ENCODE measurements at regions of chr5 and their contacts with region 1.

Region 1: DNA sequence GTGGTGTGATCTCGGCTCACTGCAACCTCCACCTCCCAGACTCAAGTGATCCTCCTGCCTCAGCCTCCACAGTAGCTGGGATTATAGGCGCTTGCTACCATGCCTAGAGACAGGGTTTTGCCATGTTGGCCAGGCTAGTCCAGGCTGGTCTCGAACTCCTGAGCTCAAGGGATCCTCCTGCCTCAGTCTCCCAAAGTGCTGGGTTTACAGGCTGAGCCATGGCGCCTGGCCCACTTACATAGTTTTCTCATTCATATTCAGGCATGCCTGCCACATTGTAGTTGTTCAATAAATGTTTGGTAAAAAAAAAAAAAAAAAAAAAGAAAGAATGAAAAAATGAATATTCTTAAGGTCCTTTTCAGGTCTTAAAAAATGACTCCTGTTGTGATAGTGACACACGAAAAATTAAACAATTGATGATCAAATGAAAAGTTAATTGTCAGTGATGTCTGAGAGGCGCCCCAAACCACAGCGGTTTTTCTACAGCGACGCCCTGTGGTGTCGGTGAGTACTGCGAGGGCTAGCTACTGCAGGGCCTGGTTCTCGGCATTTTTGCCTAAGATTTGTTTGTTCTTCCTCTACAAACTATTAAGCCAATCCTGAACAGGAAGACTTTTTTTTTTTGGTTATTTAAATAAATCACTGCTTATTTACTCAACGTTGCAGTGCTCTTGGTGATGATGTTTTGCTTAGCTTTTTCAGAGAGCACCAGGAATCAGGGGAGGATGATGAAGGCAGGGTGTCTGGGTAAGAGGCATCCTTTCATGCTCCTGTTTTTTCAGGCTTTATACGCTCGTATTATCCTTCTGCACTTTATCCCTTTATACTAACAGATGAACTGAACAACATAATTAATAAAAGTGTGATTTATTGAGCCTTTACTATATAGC is 67.0 kb upstream of the DPYSL3 start:
- DNase-seq: peak; percentile 49
- H3K4me3 ChIP-seq: peak overlapping the region in 1 of 2 experiments; percentile 29; a peak in 1 of 4 replicates
- H3K27ac ChIP-seq: no peak overlapping the region
- H3K4me1 ChIP-seq: peaks cover 0 to 4% of the 10 kb centered on the region in 2 experiments; a peak in 1 of 4 replicates
- H3K27me3 ChIP-seq: no peaks in the 10 kb centered on the region
- CTCF ChIP-seq: peak; percentile 88
- EP300 ChIP-seq: no peak
- RAD21 ChIP-seq: peak; percentile 69

Region 2: DNA sequence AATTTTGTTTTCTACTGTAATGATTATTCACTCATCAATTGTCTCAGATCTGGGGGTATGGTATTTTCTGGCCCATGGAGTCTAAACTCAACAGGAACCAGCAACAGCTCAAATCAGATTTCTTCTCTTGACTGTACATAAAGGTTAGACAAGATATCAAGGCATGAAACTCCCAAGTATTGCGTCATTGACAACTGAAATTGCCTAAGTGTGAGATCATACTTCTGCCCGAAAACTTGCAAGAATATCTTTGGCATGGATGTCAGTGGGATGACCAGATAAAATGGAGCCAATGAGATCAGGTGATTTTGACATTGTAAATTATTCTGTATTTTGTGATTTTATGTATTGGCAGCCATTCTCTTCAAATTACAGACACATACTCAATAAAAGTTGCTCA is 483.7 kb before region 1 on chr5:
- CTCF ChIA-PET with region 1: no interaction called
- POLR2A ChIA-PET with region 1: no interaction called
- DNase-seq: no peak
- H3K4me3 ChIP-seq: no peak overlapping the region
- H3K27ac ChIP-seq: no peak overlapping the region
- H3K4me1 ChIP-seq: peaks cover 0 to 5% of the 10 kb centered on the region in 2 experiments; a peak in 2 of 4 replicates
- H3K27me3 ChIP-seq: no peaks in the 10 kb centered on the region
- CTCF ChIP-seq: no peak
- EP300 ChIP-seq: no peak
- RAD21 ChIP-seq: no peak

Region 3: DNA sequence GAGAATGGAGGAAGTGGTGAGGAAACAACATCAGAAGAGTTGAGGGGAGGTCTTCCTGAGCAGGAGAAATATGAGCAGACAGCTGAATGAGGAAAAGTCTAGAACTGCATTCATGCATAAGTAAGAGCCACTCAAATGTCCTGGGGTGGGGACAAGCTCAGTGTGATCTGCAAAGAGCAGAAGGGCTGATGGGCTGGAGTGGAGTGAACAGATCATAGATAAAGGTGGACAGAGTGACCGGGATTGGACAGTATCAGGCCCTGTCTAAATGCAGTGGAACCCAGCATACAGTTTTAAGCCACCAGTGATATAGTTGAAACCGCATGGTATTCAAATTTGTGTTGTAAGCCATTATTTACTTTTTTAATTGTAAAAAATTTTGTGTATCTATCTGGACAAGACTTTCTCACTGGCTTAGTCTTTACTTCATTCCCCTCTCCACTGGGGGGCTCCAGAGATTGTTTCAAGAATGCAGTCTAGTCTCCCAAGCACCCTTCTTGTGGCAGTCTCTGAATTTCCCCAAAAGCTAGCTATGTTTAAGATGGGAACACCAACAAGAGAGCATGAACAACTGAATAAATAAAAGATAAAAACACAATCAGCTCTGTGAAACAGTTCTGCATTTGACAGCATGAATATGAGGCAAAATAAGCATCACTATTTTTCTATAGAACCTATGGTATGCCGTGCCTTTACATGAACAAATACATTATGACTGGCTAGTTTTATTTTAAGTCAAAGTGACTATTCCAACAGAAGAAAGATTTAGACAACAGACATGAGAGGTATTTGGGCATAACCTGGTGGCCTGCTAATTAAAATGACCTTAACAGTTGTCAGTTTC is 352.7 kb before region 1 on chr5:
- CTCF ChIA-PET with region 1: interaction called, 55 read pairs
- POLR2A ChIA-PET with region 1: no interaction called
- DNase-seq: peak; percentile 69
- H3K4me3 ChIP-seq: no peak overlapping the region
- H3K27ac ChIP-seq: no peak overlapping the region
- H3K4me1 ChIP-seq: no peaks in the 10 kb centered on the region; a peak in 2 of 4 replicates
- H3K27me3 ChIP-seq: no peaks in the 10 kb centered on the region
- CTCF ChIP-seq: peak; percentile 84
- EP300 ChIP-seq: no peak
- RAD21 ChIP-seq: peak; percentile 84

Region 4: GRCh38 chr5:147382776-147383175 is 194.1 kb before region 1 on chr5:
- CTCF ChIA-PET with region 1: interaction called, 10 read pairs
- POLR2A ChIA-PET with region 1: no interaction called
- DNase-seq: no peak
- H3K4me3 ChIP-seq: no peak overlapping the region
- H3K27ac ChIP-seq: no peak overlapping the region; a peak in 1 of 4 replicates
- H3K4me1 ChIP-seq: peaks cover 0 to 35% of the 10 kb centered on the region in 2 experiments; a peak in 2 of 4 replicates
- H3K27me3 ChIP-seq: no peaks in the 10 kb centered on the region
- CTCF ChIP-seq: no peak
- EP300 ChIP-seq: no peak
- RAD21 ChIP-seq: no peak

Region 5: GRCh38 chr5:147453875-147454814 is 122.7 kb before region 1 on chr5:
- CTCF ChIA-PET with region 1: interaction called, 118 read pairs
- POLR2A ChIA-PET with region 1: no interaction called
- DNase-seq: peak; percentile 96
- H3K4me3 ChIP-seq: peak overlapping the region; percentile 85 to 87
- H3K27ac ChIP-seq: peak overlapping the region; percentile 90 to 91
- H3K4me1 ChIP-seq: peaks cover 20 to 29% of the 10 kb centered on the region in 2 experiments
- H3K27me3 ChIP-seq: no peaks in the 10 kb centered on the region
- CTCF ChIP-seq: peak; percentile 97
- EP300 ChIP-seq: no peak; a peak in 1 of 4 replicates
- RAD21 ChIP-seq: peak; percentile 82

Region 6: GRCh38 chr5:147472664-147473475 is 104.0 kb before region 1 on chr5:
- CTCF ChIA-PET with region 1: interaction called, 63 read pairs
- POLR2A ChIA-PET with region 1: no interaction called
- DNase-seq: peak; percentile 74
- H3K4me3 ChIP-seq: no peak overlapping the region
- H3K27ac ChIP-seq: peak overlapping the region; percentile 26 to 92; a peak in 3 of 4 replicates
- H3K4me1 ChIP-seq: peaks cover 24 to 38% of the 10 kb centered on the region in 2 experiments; a peak in 3 of 4 replicates
- H3K27me3 ChIP-seq: no peaks in the 10 kb centered on the region
- CTCF ChIP-seq: no peak
- EP300 ChIP-seq: peak; percentile 35 to 99; a peak in 2 of 4 replicates
- RAD21 ChIP-seq: 0 out of 2 replicates have a peak, but pooled peaks have one; percentile 17

Region 7: GRCh38 chr5:147565524-147565923 is 11.4 kb before region 1 on chr5:
- CTCF ChIA-PET with region 1: interaction called, 76 read pairs
- POLR2A ChIA-PET with region 1: no interaction called
- DNase-seq: no peak
- H3K4me3 ChIP-seq: no peak overlapping the region
- H3K27ac ChIP-seq: no peak overlapping the region
- H3K4me1 ChIP-seq: peaks cover 0 to 3% of the 10 kb centered on the region in 2 experiments; a peak in 1 of 4 replicates
- H3K27me3 ChIP-seq: no peaks in the 10 kb centered on the region
- CTCF ChIP-seq: no peak
- EP300 ChIP-seq: 0 out of 4 replicates have a peak, but pooled peaks of 1 of the 2 experiments have one; percentile 22
- RAD21 ChIP-seq: no peak

Region 8: GRCh38 chr5:147613359-147613758 is 36.5 kb after region 1 on chr5:
- CTCF ChIA-PET with region 1: no interaction called
- POLR2A ChIA-PET with region 1: no interaction called
- DNase-seq: no peak
- H3K4me3 ChIP-seq: no peak overlapping the region
- H3K27ac ChIP-seq: no peak overlapping the region
- H3K4me1 ChIP-seq: no peaks in the 10 kb centered on the region
- H3K27me3 ChIP-seq: no peaks in the 10 kb centered on the region
- CTCF ChIP-seq: no peak
- EP300 ChIP-seq: no peak
- RAD21 ChIP-seq: no peak

Region 9: GRCh38 chr5:147782110-147783028 is 205.5 kb after region 1 on chr5 and contains the start of gene JAKMIP2:
- CTCF ChIA-PET with region 1: no interaction called
- POLR2A ChIA-PET with region 1: no interaction called
- DNase-seq: peak; percentile 88
- H3K4me3 ChIP-seq: peak within 1 kb of the TSS; percentile 69 to 70
- H3K27ac ChIP-seq: peak within 1 kb of the TSS; percentile 54 to 99
- H3K4me1 ChIP-seq: no peaks in the 10 kb centered on the region; a peak in 2 of 4 replicates
- H3K27me3 ChIP-seq: no peaks in the 10 kb centered on the region
- CTCF ChIP-seq: peak; percentile 22
- EP300 ChIP-seq: no peak; a peak in 1 of 4 replicates
- RAD21 ChIP-seq: peak; percentile 43
- polyA plus RNA-seq, gene JAKMIP2: 1.8 and 2.1 TPM in 2 replicates